Astrocyte of the cerebellum (primary cell): ENCODE measurements at regions of chr5 and their contacts with region 1.

Region 1: GRCh38 chr5:148998174-148998797 is 64.6 kb downstream of the SH3TC2 start:
- DNase-seq: no peak
- H3K4me3 ChIP-seq: no peak overlapping the region
- CTCF ChIP-seq: peak; percentile 62

Region 2: GRCh38 chr5:148730943-148731861 is 267.1 kb before region 1 on chr5:
- in situ Hi-C with region 1: loop called (anchors 25 kb)
- DNase-seq: peak; percentile 87
- H3K4me3 ChIP-seq: no peak overlapping the region
- CTCF ChIP-seq: peak; percentile 70

Region 3: GRCh38 chr5:148912714-148913398 is 85.4 kb before region 1 on chr5:
- in situ Hi-C with region 1: loop called (anchors 5 kb)
- DNase-seq: peak; percentile 85
- H3K4me3 ChIP-seq: no peak overlapping the region
- CTCF ChIP-seq: peak; percentile 46

Region 4: GRCh38 chr5:148939676-148940075 is 58.6 kb before region 1 on chr5:
- in situ Hi-C with region 1: loop called (anchors 10 kb)
- DNase-seq: peak; percentile 19
- H3K4me3 ChIP-seq: no peak overlapping the region
- CTCF ChIP-seq: no peak

Region 5: GRCh38 chr5:149108651-149109280 is 110.5 kb after region 1 on chr5:
- in situ Hi-C with region 1: no loop called
- DNase-seq: no peak
- H3K4me3 ChIP-seq: no peak overlapping the region
- CTCF ChIP-seq: no peak